CD4-positive, alpha-beta memory T cell (primary cell): ENCODE measurements at regions of chr2 and their contacts with region 1.

Region 1: DNA sequence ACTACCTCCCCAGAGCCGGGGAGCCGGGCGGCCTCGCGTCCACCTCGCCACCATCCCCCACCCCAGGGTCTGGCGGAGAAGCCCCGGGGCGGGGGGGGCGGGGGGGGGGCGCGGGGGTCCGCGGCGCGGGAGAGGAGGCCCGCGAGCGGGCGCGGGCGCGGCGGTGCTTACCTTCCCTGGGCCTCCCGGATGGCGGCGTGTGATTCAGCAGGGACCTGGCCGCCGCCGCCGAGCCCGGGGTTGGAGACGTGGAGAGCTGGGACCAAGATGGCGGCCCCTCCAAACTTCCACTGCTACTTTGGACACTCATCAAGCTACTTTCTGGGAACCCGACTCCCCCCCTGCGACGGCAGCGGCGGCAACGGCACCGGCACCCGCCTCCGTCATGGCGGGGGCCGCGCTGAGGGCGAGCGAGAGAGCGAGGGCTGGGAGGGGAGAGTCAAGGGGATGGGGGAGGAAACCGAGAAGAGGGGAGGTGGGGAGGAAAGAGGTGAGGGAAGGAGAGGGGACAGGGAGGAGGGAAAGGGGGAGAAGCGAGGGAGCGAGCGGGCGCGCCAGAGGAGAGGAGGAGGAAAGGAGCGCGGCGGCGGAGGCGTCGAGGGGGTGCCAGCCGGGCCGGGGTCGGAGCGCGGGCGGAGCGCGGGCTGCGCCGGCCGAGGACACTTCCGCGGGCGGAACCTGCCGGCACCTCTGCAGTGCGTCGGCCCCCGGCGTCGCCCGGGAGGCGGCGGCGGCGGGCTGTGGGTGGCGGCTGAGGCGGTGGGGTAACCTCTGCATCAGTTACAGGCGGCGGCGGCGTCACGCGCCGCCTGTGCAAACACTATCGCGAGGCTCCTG is at the start of gene TLK1:
- DNase-seq: peak; percentile 78 to 84 (median 82)
- H3K4me3 ChIP-seq: peak within 1 kb of the TSS; percentile 78 to 95
- H3K4me3 Mint-ChIP-seq: peak within 1 kb of the TSS; percentile 94 to 99 (median 96)
- H3K27ac ChIP-seq: peak within 1 kb of the TSS; percentile 89
- H3K27ac Mint-ChIP-seq: peak within 1 kb of the TSS; percentile 93 to 98 (median 94)
- H3K4me1 ChIP-seq: peaks cover 72% of the 10 kb centered on the region
- H3K4me1 Mint-ChIP-seq: peaks cover 51 to 77% (median 61%) of the 10 kb centered on the region in 4 donors
- H3K27me3 ChIP-seq: no peaks in the 10 kb centered on the region
- H3K27me3 Mint-ChIP-seq: no peaks in the 10 kb centered on the region
- total RNA-seq, gene TLK1: 138 to 152 TPM

Region 2: GRCh38 chr2:170928824-170929685 is 231.3 kb before region 1 on chr2 and contains the start of gene GORASP2:
- CTCF ChIA-PET with region 1: interaction called, 26 read pairs
- POLR2A ChIA-PET with region 1: interaction called, 23 read pairs
- intact Hi-C with region 1: loop called (anchors 1 kb)
- DNase-seq: peak; percentile 98 to 99 (median 99)
- H3K4me3 ChIP-seq: peak within 1 kb of the TSS; percentile 70 to 82
- H3K4me3 Mint-ChIP-seq: peak within 1 kb of the TSS; percentile 93 to 99 (median 96)
- H3K27ac ChIP-seq: peak within 1 kb of the TSS; percentile 89
- H3K27ac Mint-ChIP-seq: peak within 1 kb of the TSS; percentile 94 to 98 (median 97)
- H3K4me1 ChIP-seq: peaks cover 43% of the 10 kb centered on the region
- H3K4me1 Mint-ChIP-seq: peaks cover 24 to 48% (median 38%) of the 10 kb centered on the region in 4 donors
- H3K27me3 ChIP-seq: no peaks in the 10 kb centered on the region
- H3K27me3 Mint-ChIP-seq: no peaks in the 10 kb centered on the region
- total RNA-seq, gene GORASP2: 82.4 to 83.2 TPM

Region 3: GRCh38 chr2:171086352-171087290 is 73.7 kb before region 1 on chr2:
- CTCF ChIA-PET with region 1: interaction called, 91 read pairs
- POLR2A ChIA-PET with region 1: interaction called, 23 read pairs
- intact Hi-C with region 1: loop called (anchors 1 kb)
- DNase-seq: peak; percentile 47 to 71 (median 56)
- H3K4me3 ChIP-seq: peak overlapping the region in 1 of 2 donors; percentile 19
- H3K4me3 Mint-ChIP-seq: peak overlapping the region; percentile 74 to 90 (median 84)
- H3K27ac ChIP-seq: peak overlapping the region; percentile 30
- H3K27ac Mint-ChIP-seq: peak overlapping the region; percentile 80 to 95 (median 90)
- H3K4me1 ChIP-seq: peaks cover 72% of the 10 kb centered on the region
- H3K4me1 Mint-ChIP-seq: peaks cover 48 to 78% (median 65%) of the 10 kb centered on the region in 4 donors
- H3K27me3 ChIP-seq: no peaks in the 10 kb centered on the region
- H3K27me3 Mint-ChIP-seq: no peaks in the 10 kb centered on the region

Region 4: GRCh38 chr2:171146633-171147032 is 13.7 kb before region 1 on chr2:
- CTCF ChIA-PET with region 1: interaction called, 7 read pairs
- POLR2A ChIA-PET with region 1: interaction called, 12 read pairs
- intact Hi-C with region 1: loop called (anchors 2 kb)
- DNase-seq: no peak
- H3K4me3 ChIP-seq: no peak overlapping the region
- H3K4me3 Mint-ChIP-seq: peak overlapping the region in 3 of 8 donors; percentile 37 to 70 (median 61)
- H3K27ac ChIP-seq: no peak overlapping the region
- H3K27ac Mint-ChIP-seq: peak overlapping the region in 5 of 7 donors; percentile 5 to 78 (median 47)
- H3K4me1 ChIP-seq: peaks cover 89% of the 10 kb centered on the region
- H3K4me1 Mint-ChIP-seq: peaks cover 64 to 88% (median 76%) of the 10 kb centered on the region in 4 donors
- H3K27me3 ChIP-seq: no peaks in the 10 kb centered on the region
- H3K27me3 Mint-ChIP-seq: no peaks in the 10 kb centered on the region

Region 5: GRCh38 chr2:171260471-171261424 is 100.4 kb after region 1 on chr2:
- CTCF ChIA-PET with region 1: no interaction called
- POLR2A ChIA-PET with region 1: no interaction called
- intact Hi-C with region 1: loop called (anchors 5 kb)
- DNase-seq: no peak
- H3K4me3 ChIP-seq: no peak overlapping the region
- H3K4me3 Mint-ChIP-seq: peak overlapping the region in 4 of 8 donors; percentile 5 to 71 (median 25)
- H3K27ac ChIP-seq: no peak overlapping the region
- H3K27ac Mint-ChIP-seq: peak overlapping the region in 6 of 7 donors; percentile 5 to 89 (median 70)
- H3K4me1 ChIP-seq: peaks cover 13% of the 10 kb centered on the region
- H3K4me1 Mint-ChIP-seq: peaks cover 9 to 16% (median 13%) of the 10 kb centered on the region in 4 donors
- H3K27me3 ChIP-seq: no peaks in the 10 kb centered on the region
- H3K27me3 Mint-ChIP-seq: no peaks in the 10 kb centered on the region

Region 6: DNA sequence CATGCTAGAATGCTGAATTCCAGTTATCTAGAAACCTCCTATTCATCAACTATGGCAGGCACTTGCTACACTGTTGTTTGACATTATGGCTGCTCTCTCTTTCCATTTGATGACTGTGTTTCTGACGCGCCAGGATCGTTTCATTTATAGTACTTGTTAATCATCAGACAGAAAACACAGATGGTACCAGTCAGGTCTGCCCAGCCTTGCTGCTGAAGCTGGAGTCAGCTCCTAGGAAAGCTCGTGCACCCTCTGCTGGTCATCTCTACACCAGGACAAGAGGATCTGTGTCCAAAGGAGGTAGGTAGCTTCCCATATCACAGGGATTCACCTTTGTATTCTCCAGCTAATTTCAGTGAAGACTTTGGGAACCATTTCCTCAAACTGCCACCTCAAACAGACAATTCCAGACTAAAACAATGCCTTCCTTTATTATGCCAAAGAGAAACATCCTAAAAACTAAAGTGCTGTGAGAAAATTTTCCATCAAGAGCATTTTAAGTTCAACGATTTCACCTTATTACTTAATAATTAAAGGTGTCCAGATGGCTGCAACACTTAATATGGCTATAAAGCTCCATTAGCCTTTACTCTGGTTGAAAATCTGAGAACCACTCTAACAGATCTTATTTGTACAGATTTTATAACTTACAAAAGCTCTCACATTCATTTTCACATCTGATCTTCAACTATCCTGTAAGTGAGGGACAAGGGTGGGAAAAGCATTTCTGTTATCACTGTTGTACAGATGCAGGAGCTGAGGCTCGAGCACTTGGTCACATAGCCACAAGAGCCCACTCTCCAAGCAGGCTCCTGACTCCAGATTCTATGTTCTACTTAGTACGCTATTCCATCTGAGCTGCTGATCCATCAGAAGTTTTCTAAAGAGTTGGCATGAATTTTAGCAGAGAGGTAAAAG is 255.9 kb after region 1 on chr2:
- CTCF ChIA-PET with region 1: interaction called, 37 read pairs
- POLR2A ChIA-PET with region 1: interaction called, 13 read pairs
- intact Hi-C with region 1: loop called (anchors 1 kb)
- DNase-seq: peak; percentile 73 to 85 (median 78)
- H3K4me3 ChIP-seq: no peak overlapping the region
- H3K4me3 Mint-ChIP-seq: peak overlapping the region in 3 of 8 donors; percentile 5 to 41 (median 10)
- H3K27ac ChIP-seq: no peak overlapping the region
- H3K27ac Mint-ChIP-seq: peak overlapping the region; percentile 19 to 92 (median 54)
- H3K4me1 ChIP-seq: peaks cover 10% of the 10 kb centered on the region
- H3K4me1 Mint-ChIP-seq: peaks cover 10 to 18% (median 11%) of the 10 kb centered on the region in 4 donors
- H3K27me3 ChIP-seq: no peaks in the 10 kb centered on the region
- H3K27me3 Mint-ChIP-seq: no peaks in the 10 kb centered on the region